ENCODE measurements at regions of chr7 and their contacts with region 1.

Region 1: DNA sequence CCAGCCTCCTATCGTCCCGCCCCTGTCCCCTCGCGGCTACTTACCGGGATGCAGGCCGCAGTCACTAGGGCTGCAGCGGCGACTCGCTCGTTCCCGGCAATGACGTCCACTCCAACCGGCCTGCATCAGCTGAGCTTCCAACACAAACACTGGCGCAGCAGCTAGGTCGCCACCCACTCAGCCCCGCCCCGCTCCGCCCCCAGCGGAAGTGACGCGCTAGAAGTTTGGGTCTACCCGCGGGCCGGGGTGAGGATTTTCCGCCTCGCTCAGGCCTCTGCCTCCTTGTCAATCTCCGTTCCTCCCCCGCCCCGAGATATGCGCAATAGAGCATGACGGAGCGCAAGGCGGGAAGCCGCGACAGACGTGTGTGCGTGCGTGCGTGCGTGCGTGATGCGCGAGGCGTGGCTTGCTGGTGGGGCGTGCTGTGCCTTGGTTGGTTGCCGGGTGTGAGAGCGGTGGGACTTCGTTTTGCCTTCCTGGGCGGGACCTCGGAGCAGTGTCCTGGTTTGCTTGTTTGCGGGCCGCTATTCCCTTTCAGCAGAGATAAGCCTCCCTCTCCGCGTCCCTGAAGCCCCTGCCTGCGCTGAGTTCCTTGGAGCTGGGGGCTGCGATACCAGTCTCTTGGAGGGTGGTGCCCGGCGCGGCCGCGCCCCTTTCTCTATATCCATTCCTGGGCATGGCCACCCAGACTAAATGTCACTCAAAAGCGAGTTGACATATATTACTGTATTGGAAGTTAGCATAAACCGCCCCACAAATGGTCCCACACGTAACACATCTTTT is at the start of gene PNPLA8:
- DNase-seq: peak; percentile 100
- ATAC-seq: peak; percentile 91 to 96 (median 94)
- H3K4me3 ChIP-seq: peak within 1 kb of the TSS; percentile 70
- H3K27ac ChIP-seq: peak within 1 kb of the TSS; percentile 98
- H3K4me1 ChIP-seq: peaks cover 31% of the 10 kb centered on the region
- H3K27me3 ChIP-seq: no peaks in the 10 kb centered on the region
- CTCF ChIP-seq: peak; percentile 20
- total RNA-seq, gene PNPLA8: 30.3 to 103 (median 58.9) TPM

Region 2: DNA sequence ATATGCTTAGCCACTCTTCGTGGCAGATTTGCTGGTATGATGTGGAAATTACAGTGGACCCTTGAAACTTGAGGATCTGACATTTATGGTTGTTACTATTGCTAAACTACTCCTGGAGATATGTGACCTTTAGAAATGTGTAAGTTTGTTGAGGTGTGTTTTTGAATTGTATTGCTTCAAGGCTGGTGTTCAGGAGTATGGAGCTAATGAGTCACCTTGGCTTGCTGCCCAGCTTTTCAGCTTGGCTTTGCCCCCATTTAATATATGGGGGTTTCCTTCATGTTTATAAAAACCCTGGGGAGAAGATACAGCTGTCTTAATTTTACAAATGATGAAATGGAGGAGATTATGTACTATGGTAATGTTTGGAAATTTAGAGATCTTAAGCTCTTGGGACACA is 1345.8 kb before region 1 on chr7:
- intact Hi-C with region 1: no loop called
- DNase-seq: peak in 1 of 2 donors; percentile 26
- ATAC-seq: peak in 2 of 4 donors; percentile 27 to 39
- H3K4me3 ChIP-seq: no peak overlapping the region
- H3K27ac ChIP-seq: peak overlapping the region; percentile 54
- H3K4me1 ChIP-seq: peaks cover 42% of the 10 kb centered on the region
- H3K27me3 ChIP-seq: no peaks in the 10 kb centered on the region
- CTCF ChIP-seq: no peak

Region 3: DNA sequence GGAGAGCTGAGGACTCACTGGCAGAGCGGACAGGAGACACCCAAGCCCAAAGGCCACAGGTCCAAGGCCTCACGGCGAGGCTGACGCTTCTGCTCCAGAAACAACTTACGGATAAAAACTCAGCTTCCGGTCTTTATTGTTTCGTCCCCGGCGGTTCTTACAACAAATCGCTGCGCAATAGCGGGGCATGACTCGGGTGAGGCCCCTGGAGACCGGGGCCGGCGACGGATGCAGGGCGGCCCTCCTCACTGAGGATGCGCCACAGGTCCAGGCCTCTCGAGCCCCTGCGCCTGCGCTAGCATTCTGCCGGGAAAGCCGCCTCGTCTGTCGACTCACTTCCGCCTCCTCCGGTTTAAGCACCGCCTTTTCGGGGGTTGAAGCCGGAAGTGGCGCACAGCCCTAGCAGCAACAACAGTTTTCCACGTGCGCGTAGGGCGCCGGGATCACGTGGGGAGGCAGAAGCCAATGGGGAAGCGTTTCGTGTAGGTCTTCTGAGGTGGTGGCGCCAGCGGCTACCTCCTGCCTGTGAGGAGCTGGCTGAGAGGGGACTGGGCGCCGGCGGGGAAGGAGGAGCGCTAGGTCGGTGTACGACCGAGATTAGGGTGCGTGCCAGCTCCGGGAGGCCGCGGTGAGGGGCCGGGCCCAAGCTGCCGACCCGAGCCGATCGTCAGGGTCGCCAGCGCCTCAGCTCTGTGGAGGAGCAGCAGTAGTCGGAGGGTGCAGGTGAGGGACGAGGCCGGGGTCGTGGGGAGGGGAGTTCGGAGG is 43.4 kb after region 1 on chr7 and contains the starts of genes DNAJB9 and THAP5:
- intact Hi-C with region 1: loop called (anchors 1 to 2 kb)
- DNase-seq: peak; percentile 99 to 100
- ATAC-seq: peak; percentile 96 to 98 (median 98)
- H3K4me3 ChIP-seq: peak within 1 kb of the TSS; percentile 90
- H3K27ac ChIP-seq: peak within 1 kb of the TSS; percentile 94
- H3K4me1 ChIP-seq: peaks cover 53% of the 10 kb centered on the region
- H3K27me3 ChIP-seq: no peaks in the 10 kb centered on the region
- CTCF ChIP-seq: no peak
- total RNA-seq, gene DNAJB9: 25.5 to 33.8 (median 29.1) TPM
- total RNA-seq, gene THAP5: 23.1 to 40.3 (median 28.1) TPM